ENCODE measurements at regions of chr7 and their contacts with region 1.

Region 1: GRCh38 chr7:33261585-33261984 is 132.2 kb downstream of the BBS9 start:
- DNase-seq: no peak
- H3K4me3 ChIP-seq: no peak overlapping the region
- H3K27ac ChIP-seq: no peak overlapping the region
- H3K4me1 ChIP-seq: no peaks in the 10 kb centered on the region
- H3K27me3 ChIP-seq: no peaks in the 10 kb centered on the region
- CTCF ChIP-seq: no peak
- EP300 ChIP-seq: no peak
- RAD21 ChIP-seq: no peak

Region 2: GRCh38 chr7:33243319-33243881 is 18.2 kb before region 1 on chr7:
- CTCF ChIA-PET with region 1: interaction called, 59 read pairs
- POLR2A ChIA-PET with region 1: no interaction called
- DNase-seq: peak; percentile 57
- H3K4me3 ChIP-seq: no peak overlapping the region
- H3K27ac ChIP-seq: no peak overlapping the region
- H3K4me1 ChIP-seq: no peaks in the 10 kb centered on the region
- H3K27me3 ChIP-seq: no peaks in the 10 kb centered on the region
- CTCF ChIP-seq: peak; percentile 97
- EP300 ChIP-seq: no peak
- RAD21 ChIP-seq: peak; percentile 99

Region 3: GRCh38 chr7:33346055-33346454 is 84.5 kb after region 1 on chr7:
- CTCF ChIA-PET with region 1: no interaction called
- POLR2A ChIA-PET with region 1: no interaction called
- DNase-seq: no peak
- H3K4me3 ChIP-seq: no peak overlapping the region
- H3K27ac ChIP-seq: no peak overlapping the region
- H3K4me1 ChIP-seq: no peaks in the 10 kb centered on the region
- H3K27me3 ChIP-seq: no peaks in the 10 kb centered on the region
- CTCF ChIP-seq: no peak
- EP300 ChIP-seq: no peak
- RAD21 ChIP-seq: no peak